Activated CD4-positive, alpha-beta T cell treated with anti-CD3 and anti-CD28 coated beads for 36 hours (primary cell): ENCODE measurements at regions of chr9 and their contacts with region 1.

Region 1: GRCh38 chr9:96241391-96241809 is 60.6 kb downstream of the HSD17B3 start:
- DNase-seq: peak; percentile 83
- ATAC-seq: peak; percentile 84
- H3K4me3 Mint-ChIP-seq: no peak overlapping the region
- H3K27ac Mint-ChIP-seq: no peak overlapping the region
- H3K4me1 Mint-ChIP-seq: peaks cover 13% of the 10 kb centered on the region
- H3K27me3 Mint-ChIP-seq: peaks cover 59% of the 10 kb centered on the region

Region 2: DNA sequence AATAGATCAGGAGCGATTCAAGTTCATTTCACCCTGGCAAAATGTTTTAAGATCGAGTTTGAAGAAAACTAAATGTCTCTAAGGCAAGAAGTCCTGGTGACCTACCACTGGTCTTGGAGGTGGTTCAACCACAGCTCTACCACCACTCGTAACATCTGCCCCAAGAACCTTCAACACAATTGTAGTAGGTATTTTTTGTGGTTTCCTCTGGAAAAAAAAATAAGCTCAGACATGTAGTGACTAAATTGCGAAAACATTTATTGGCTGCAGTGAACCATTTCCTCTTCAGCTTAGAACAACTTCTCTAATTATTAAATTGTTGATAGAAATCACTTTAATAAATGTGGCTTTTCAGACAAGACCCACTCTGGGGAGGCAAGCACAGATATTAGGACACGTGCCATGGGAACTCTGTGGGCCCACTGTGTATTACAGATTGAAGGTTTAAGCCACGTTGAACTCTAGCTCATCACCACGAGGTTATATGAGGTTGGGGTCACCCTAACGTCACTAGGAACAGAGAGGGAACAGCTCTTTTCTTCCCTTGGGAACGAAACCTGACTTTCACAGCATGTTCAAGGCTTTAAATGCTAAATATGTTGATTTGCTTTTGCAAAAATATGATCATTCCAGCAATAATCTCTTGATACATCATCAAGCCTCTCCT is 82.4 kb before region 1 on chr9:
- CTCF ChIA-PET with region 1: no interaction called
- POLR2A ChIA-PET with region 1: no interaction called
- intact Hi-C with region 1: no loop called
- DNase-seq: no peak
- ATAC-seq: no peak
- H3K4me3 Mint-ChIP-seq: no peak overlapping the region
- H3K27ac Mint-ChIP-seq: no peak overlapping the region
- H3K4me1 Mint-ChIP-seq: peaks cover 5% of the 10 kb centered on the region
- H3K27me3 Mint-ChIP-seq: peaks cover 17% of the 10 kb centered on the region

Region 3: GRCh38 chr9:96478829-96479371 is 237.5 kb after region 1 on chr9:
- CTCF ChIA-PET with region 1: no interaction called
- POLR2A ChIA-PET with region 1: no interaction called
- intact Hi-C with region 1: loop called in 1 of 2 experiments (anchors 1 kb)
- DNase-seq: peak; percentile 59
- ATAC-seq: peak; percentile 83
- H3K4me3 Mint-ChIP-seq: no peak overlapping the region
- H3K27ac Mint-ChIP-seq: peak overlapping the region; percentile 72
- H3K4me1 Mint-ChIP-seq: peaks cover 28% of the 10 kb centered on the region
- H3K27me3 Mint-ChIP-seq: no peaks in the 10 kb centered on the region